ENCODE measurements at regions of chr2 and their contacts with region 1.

Region 1: DNA sequence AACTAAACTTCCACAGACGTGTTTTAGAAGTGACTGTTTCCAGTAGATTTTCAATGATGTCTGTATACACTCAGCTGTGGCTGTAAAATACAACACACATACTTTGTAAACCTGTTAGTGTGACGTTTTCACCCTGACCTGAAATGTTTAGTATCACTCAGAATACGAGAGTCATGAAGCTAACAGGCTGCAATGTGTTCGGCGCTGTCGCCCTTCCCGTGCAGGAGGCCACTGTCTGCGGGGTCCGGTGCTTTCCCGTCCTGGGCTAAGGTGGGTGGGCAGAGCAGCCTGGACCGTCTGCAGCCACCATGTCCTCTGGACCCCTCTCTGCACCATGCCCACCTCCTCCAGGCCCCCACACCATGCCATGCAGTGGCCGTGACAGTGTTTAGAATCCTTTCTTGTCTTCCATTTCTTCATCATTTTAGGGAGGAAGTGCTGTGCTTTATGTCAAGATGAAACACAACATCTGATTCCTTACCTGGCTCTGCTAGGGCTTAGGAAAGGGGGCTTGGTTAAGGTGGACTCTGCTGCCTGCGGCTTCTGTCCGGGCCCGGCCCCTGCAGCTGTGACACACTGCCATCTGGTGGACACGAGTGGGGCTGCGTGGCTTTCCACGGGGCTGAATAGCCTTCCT is 53.8 kb upstream of the RBM44 start:
- DNase-seq: peak; percentile 92

Region 2: GRCh38 chr2:237512774-237513466 is 231.8 kb before region 1 on chr2:
- intact Hi-C with region 1: loop called (anchors 10 kb)
- DNase-seq: peak; percentile 92

Region 3: GRCh38 chr2:237581751-237582746 is 162.7 kb before region 1 on chr2:
- intact Hi-C with region 1: loop called (anchors 1 kb)
- DNase-seq: peak; percentile 87

Region 4: DNA sequence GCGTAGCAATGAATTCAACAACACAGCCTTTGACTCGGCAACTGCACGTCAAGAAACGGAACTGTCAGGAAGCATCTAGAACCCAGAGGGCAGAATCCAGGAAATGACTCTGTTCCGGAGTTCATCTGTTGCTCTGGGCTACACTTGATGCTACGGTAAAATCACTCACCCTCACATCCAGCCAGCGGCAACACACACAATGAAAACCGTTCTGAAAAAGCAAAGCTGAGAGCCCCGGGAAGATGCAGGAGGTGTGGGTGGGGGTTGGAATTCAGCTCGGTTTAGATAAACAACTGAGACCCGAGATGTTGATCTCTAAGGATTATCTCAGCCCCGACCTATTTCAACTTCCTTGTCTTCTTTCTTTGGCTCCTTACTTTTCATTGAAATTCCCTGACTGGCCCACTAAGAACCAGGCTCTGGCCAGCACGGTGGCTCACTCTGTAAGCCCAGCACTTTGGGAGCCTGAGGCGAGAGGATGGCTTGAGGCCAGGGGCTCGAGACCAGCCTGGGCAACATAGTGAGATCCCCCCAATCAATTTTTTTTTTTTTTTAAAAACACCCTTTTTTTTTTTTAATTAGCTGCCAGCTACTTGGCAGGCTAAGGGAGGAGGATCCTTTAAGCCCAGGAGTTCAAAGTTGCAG is 140.9 kb before region 1 on chr2:
- intact Hi-C with region 1: loop called (anchors 5 kb)
- DNase-seq: no peak

Region 5: GRCh38 chr2:238139196-238140039 is 394.7 kb after region 1 on chr2:
- intact Hi-C with region 1: no loop called
- DNase-seq: no peak